PC-3 (cell line): ENCODE measurements at regions of chr2 and their contacts with region 1.

Region 1: GRCh38 chr2:165408186-165408585 is 61.3 kb upstream of the CSRNP3 start:
- DNase-seq: peak; percentile 83
- ATAC-seq: peak; percentile 73
- H3K4me3 ChIP-seq: 0 out of 2 replicates have a peak overlapping the region, but pooled peaks have one; percentile 4
- H3K27ac ChIP-seq: peak overlapping the region; percentile 76
- H3K4me1 ChIP-seq: peaks cover 41% of the 10 kb centered on the region
- H3K27me3 ChIP-seq: no peaks in the 10 kb centered on the region
- CTCF ChIP-seq: no peak

Region 2: DNA sequence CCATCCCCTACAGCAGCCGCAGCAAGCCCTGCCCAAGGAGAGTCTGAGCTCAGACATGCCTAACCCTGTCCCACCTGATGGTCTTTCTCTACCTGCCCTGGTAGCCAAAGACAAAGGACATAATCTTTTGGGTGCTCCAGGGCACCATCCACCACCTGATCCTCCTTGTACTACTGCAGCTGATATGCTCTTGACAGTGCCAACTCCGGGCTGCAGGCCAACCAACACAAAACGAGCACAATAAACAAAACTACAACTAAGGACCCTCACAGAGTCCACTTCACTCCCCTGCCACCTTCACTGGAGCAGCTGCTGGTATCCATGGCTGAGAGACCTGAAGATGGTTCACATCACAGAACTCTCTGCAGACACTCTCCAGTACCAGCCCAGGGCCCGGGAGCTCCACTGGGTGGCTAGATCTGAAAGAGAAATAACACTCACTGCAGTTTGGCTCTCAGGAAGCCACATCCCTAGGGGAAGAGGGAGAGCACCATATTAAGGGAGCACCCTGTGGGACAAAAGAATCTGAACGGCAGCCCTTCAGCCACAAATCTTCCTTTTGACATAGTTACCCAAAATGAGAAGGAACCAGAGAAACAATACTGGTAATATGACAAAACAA is 893.0 kb before region 1 on chr2:
- CTCF ChIA-PET with region 1: interaction called, 14 read pairs
- POLR2A ChIA-PET with region 1: no interaction called
- intact Hi-C with region 1: no loop called
- DNase-seq: no peak
- ATAC-seq: no peak
- H3K4me3 ChIP-seq: peak overlapping the region; percentile 15; the same call in 1 of the 2 replicates
- H3K27ac ChIP-seq: peak overlapping the region; percentile 83
- H3K4me1 ChIP-seq: peaks cover 21% of the 10 kb centered on the region
- H3K27me3 ChIP-seq: no peaks in the 10 kb centered on the region
- CTCF ChIP-seq: no peak

Region 3: GRCh38 chr2:165428926-165429325 is 20.7 kb after region 1 on chr2:
- CTCF ChIA-PET with region 1: no interaction called
- POLR2A ChIA-PET with region 1: interaction called, 4 read pairs
- intact Hi-C with region 1: loop called (anchors 2 kb)
- DNase-seq: peak; percentile 52
- ATAC-seq: no peak; the same call in 1 of the 2 replicates
- H3K4me3 ChIP-seq: no peak overlapping the region
- H3K27ac ChIP-seq: peak overlapping the region; percentile 68
- H3K4me1 ChIP-seq: peaks cover 14% of the 10 kb centered on the region
- H3K27me3 ChIP-seq: no peaks in the 10 kb centered on the region
- CTCF ChIP-seq: no peak

Region 4: GRCh38 chr2:165469417-165469816 is 61.2 kb after region 1 on chr2 and contains the start of gene CSRNP3:
- CTCF ChIA-PET with region 1: interaction called, 4 read pairs
- POLR2A ChIA-PET with region 1: interaction called, 10 read pairs
- intact Hi-C with region 1: loop called (anchors 1 kb)
- DNase-seq: peak; percentile 97
- ATAC-seq: peak; percentile 100
- H3K4me3 ChIP-seq: peak within 1 kb of the TSS; percentile 73
- H3K27ac ChIP-seq: no peak within 1 kb of the TSS
- H3K4me1 ChIP-seq: peaks cover 24% of the 10 kb centered on the region; the same call in 1 of the 2 replicates
- H3K27me3 ChIP-seq: no peaks in the 10 kb centered on the region
- CTCF ChIP-seq: no peak
- total RNA-seq, gene CSRNP3: 2.2 and 8.3 TPM in 2 replicates

Region 5: GRCh38 chr2:165573534-165574461 is 165.6 kb after region 1 on chr2:
- CTCF ChIA-PET with region 1: no interaction called
- POLR2A ChIA-PET with region 1: interaction called, 9 read pairs
- intact Hi-C with region 1: loop called (anchors 1 kb)
- DNase-seq: peak; percentile 62
- ATAC-seq: peak; percentile 92
- H3K4me3 ChIP-seq: peak overlapping the region; percentile 67
- H3K27ac ChIP-seq: peak overlapping the region; percentile 26
- H3K4me1 ChIP-seq: peaks cover 14% of the 10 kb centered on the region
- H3K27me3 ChIP-seq: no peaks in the 10 kb centered on the region
- CTCF ChIP-seq: no peak

Region 6: GRCh38 chr2:165794536-165794928 is 386.3 kb after region 1 on chr2:
- CTCF ChIA-PET with region 1: no interaction called
- POLR2A ChIA-PET with region 1: interaction called, 3 read pairs
- intact Hi-C with region 1: loop called (anchors 1 kb)
- DNase-seq: peak; percentile 82
- ATAC-seq: peak; percentile 54
- H3K4me3 ChIP-seq: peak overlapping the region; percentile 81
- H3K27ac ChIP-seq: peak overlapping the region; percentile 80
- H3K4me1 ChIP-seq: peaks cover 42% of the 10 kb centered on the region
- H3K27me3 ChIP-seq: no peaks in the 10 kb centered on the region
- CTCF ChIP-seq: peak; percentile 24; the same call in 1 of the 2 replicates